ENCODE measurements at regions of chr19 and their contacts with region 1.

Region 1: GRCh38 chr19:46788262-46788967 is at the start of gene SLC1A5:
- DNase-seq: peak; percentile 99
- ATAC-seq: peak; percentile 51 to 77
- H3K4me3 ChIP-seq: peak within 1 kb of the TSS; percentile 66
- H3K27ac ChIP-seq: peak within 1 kb of the TSS; percentile 96 to 97
- H3K4me1 ChIP-seq: peaks cover 40% of the 10 kb centered on the region
- CTCF ChIP-seq: peak; percentile 4; the same call in 1 of the 3 replicates
- EP300 ChIP-seq: 0 out of 5 replicates have a peak, but pooled peaks of 1 of the 2 experiments have one; percentile 13
- POLR2A ChIP-seq: peak; percentile 100
- RAD21 ChIP-seq: peak; percentile 20 to 28; a peak in 3 of 5 replicates
- polyA plus RNA-seq, gene SLC1A5: 302 and 306 TPM in 2 replicates

Region 2: GRCh38 chr19:46607448-46607841 is 181.0 kb before region 1 on chr19:
- CTCF ChIA-PET with region 1: no interaction called
- POLR2A ChIA-PET with region 1: no interaction called
- DNase-seq: no peak
- ATAC-seq: no peak
- H3K4me3 ChIP-seq: no peak overlapping the region
- H3K27ac ChIP-seq: no peak overlapping the region
- H3K4me1 ChIP-seq: peaks cover 20% of the 10 kb centered on the region
- CTCF ChIP-seq: no peak
- EP300 ChIP-seq: no peak
- POLR2A ChIP-seq: no peak
- RAD21 ChIP-seq: no peak

Region 3: DNA sequence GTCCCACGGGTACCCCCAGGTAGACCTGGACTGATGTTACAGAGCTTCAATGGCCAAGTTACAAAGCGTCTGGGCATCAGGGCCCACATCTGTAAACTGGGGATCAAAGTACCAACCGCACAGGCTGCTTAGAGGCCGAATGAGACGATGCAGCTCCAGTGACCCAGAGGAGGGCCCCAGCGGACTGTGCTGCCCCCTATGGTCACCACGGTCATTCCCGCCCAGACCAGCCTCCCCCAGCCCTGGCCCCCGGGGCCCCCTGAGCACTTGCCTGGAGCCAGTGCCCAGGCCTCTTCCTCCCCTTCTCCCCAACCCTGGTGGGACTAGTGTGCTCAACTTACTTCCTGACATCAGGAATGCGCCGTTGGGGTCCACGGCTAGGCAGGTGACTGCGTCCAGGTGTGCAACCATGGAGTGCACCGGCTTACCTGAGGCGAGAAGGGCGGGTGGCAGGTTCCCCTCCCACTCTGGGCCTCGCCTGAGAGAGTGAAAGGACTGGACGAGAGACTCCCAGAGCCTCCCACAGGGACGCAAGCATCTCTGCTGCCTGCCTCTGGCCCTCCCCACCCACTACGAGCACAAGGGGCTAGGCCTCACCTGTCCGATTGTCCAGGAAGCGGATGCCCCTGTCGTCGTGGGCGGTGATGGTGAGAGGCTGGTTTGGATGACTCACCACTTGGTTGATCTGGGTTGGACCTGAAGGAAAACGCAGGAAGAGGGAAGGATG is 66.6 kb before region 1 on chr19:
- CTCF ChIA-PET with region 1: no interaction called
- POLR2A ChIA-PET with region 1: no interaction called
- DNase-seq: peak in 1 of 2 experiments; percentile 59
- ATAC-seq: peak in 1 of 2 experiments; percentile 15; a peak in 3 of 6 replicates
- H3K4me3 ChIP-seq: no peak overlapping the region
- H3K27ac ChIP-seq: no peak overlapping the region
- H3K4me1 ChIP-seq: peaks cover 8% of the 10 kb centered on the region
- CTCF ChIP-seq: peak; percentile 17; the same call in 2 of the 3 replicates
- EP300 ChIP-seq: no peak
- POLR2A ChIP-seq: no peak
- RAD21 ChIP-seq: no peak

Region 4: DNA sequence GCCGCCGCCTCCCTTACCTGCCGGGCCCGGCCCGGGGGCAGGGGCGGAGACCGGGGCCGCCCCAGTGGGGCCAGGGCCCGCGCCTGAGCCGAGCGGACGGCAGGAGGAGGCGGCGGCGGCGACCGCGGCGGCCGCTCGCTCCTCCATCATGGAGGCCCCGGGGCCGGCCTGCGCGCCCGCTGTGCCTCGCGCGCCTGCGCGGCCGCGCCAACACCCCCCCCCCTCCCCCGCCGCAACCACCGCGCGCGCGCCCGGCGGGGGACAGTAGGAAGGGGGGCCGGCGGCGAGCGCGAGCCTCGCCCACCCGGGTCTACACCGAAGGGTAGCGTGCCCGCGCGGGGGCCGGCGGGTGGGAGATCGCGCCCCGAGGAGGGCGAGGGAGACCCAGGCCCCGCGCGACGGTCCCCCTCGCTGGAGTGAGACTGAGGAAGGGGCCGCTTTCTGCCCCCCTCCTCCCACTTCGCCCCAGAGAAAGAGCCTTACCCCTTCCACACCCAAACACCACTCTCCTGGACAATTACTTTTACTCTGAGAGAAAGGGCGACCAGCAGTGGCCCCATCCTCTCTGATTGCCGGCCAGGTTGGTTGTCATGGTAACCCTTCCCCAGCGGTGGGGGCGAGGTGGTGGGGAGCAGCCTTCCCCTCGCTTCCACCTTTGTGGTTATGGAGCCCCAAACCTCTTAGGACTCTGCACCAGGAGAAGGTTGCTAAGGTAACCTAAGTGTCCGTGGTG is 42.0 kb before region 1 on chr19 and contains the start of gene STRN4:
- CTCF ChIA-PET with region 1: interaction called, 21 read pairs
- POLR2A ChIA-PET with region 1: interaction called, 3 read pairs
- DNase-seq: peak in 1 of 2 experiments; percentile 94
- ATAC-seq: peak; percentile 37 to 63
- H3K4me3 ChIP-seq: peak within 1 kb of the TSS; percentile 98
- H3K27ac ChIP-seq: peak within 1 kb of the TSS; percentile 99 to 100
- H3K4me1 ChIP-seq: peaks cover 17% of the 10 kb centered on the region
- CTCF ChIP-seq: no peak
- EP300 ChIP-seq: no peak
- POLR2A ChIP-seq: peak; percentile 51
- RAD21 ChIP-seq: no peak
- polyA plus RNA-seq, gene STRN4: 62.8 and 66.2 TPM in 2 replicates

Region 5: GRCh38 chr19:46759817-46760333 is 28.5 kb before region 1 on chr19:
- CTCF ChIA-PET with region 1: interaction called, 159 read pairs
- POLR2A ChIA-PET with region 1: interaction called, 10 read pairs
- DNase-seq: peak in 1 of 2 experiments; percentile 86
- ATAC-seq: peak; percentile 47 to 69; a peak in 3 of 6 replicates
- H3K4me3 ChIP-seq: no peak overlapping the region
- H3K27ac ChIP-seq: peak overlapping the region; percentile 27 to 70; a peak in 5 of 6 replicates
- H3K4me1 ChIP-seq: peaks cover 26% of the 10 kb centered on the region
- CTCF ChIP-seq: no peak
- EP300 ChIP-seq: no peak
- POLR2A ChIP-seq: no peak
- RAD21 ChIP-seq: no peak

Region 6: GRCh38 chr19:46803555-46803954 is 15.1 kb after region 1 on chr19:
- CTCF ChIA-PET with region 1: interaction called, 10 read pairs
- POLR2A ChIA-PET with region 1: interaction called, 15 read pairs
- DNase-seq: no peak
- ATAC-seq: no peak; a peak in 1 of 6 replicates
- H3K4me3 ChIP-seq: no peak overlapping the region
- H3K27ac ChIP-seq: peak overlapping the region in 1 of 2 experiments; percentile 47; a peak in 3 of 6 replicates
- H3K4me1 ChIP-seq: peaks cover 12% of the 10 kb centered on the region; the same call in 2 of the 3 replicates
- CTCF ChIP-seq: no peak
- EP300 ChIP-seq: no peak
- POLR2A ChIP-seq: no peak
- RAD21 ChIP-seq: no peak

Region 7: DNA sequence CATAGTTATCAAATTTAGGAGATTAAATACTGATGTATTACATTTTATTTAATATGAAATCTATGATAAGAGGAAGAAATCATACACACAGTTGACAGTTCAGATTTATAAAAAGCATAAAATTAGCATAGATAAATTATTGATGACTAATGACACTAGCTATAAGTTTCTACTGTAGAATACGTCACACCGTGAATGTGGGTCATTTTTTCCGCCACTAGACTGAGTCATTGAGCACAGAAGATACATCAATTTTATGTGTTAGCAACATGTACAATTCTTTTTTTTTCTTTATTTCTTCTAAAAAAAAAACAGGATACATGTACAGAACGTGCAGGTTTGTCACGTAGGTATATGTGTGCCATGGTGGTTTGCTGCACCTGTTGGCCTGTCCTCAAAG is 40.1 kb after region 1 on chr19:
- CTCF ChIA-PET with region 1: interaction called, 36 read pairs
- POLR2A ChIA-PET with region 1: interaction called, 78 read pairs
- DNase-seq: no peak
- ATAC-seq: no peak
- H3K4me3 ChIP-seq: no peak overlapping the region
- H3K27ac ChIP-seq: no peak overlapping the region
- H3K4me1 ChIP-seq: peaks cover 10% of the 10 kb centered on the region
- CTCF ChIP-seq: no peak
- EP300 ChIP-seq: no peak
- POLR2A ChIP-seq: no peak
- RAD21 ChIP-seq: no peak

Region 8: GRCh38 chr19:47075179-47075810 is 286.9 kb after region 1 on chr19:
- CTCF ChIA-PET with region 1: no interaction called
- POLR2A ChIA-PET with region 1: no interaction called
- DNase-seq: no peak
- ATAC-seq: no peak
- H3K4me3 ChIP-seq: no peak overlapping the region
- H3K27ac ChIP-seq: no peak overlapping the region
- H3K4me1 ChIP-seq: peaks cover 8% of the 10 kb centered on the region
- CTCF ChIP-seq: no peak
- EP300 ChIP-seq: no peak
- POLR2A ChIP-seq: no peak
- RAD21 ChIP-seq: no peak

Measured in A549 (cell line).